ENCODE measurements at regions of chr11 and their contacts with region 1.

Region 1: GRCh38 chr11:72091005-72091691 is 10.5 kb downstream of the LRRC51 start:
- DNase-seq: peak; percentile 73

Region 2: DNA sequence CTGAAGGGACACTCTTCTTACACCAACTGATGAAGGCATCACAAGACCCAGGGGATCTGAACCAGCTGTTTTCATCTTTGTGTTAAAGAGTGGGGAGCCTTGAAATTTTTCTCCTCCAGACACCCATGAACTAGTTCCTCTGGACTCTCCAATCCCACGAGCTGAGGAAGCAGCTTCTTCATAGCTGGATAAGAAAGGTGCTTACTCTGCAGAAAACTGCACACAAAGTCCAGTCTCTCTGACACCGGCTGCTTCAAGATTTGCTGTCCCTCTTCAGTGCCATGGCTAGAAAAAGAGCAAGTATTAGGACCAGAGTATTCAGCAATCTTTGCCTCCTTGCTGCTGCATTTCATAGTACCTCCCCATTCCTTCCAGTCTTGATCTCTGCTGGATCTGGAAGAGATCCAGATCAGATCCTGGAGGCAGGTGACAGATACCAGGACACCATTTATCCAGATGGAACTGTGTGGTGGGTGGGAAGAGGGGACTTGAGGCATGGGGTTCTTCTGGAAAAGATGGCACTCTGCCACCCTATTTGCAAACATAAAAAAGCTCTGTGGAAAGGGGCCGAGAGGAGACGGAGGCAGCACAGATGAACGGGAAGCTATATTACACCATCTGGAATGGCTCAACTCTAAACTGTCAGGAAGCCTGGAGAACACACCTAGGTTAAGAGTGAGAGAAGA is 66.9 kb before region 1 on chr11:
- CTCF ChIA-PET with region 1: interaction called, 38 read pairs
- POLR2A ChIA-PET with region 1: interaction called, 11 read pairs
- DNase-seq: no peak

Region 3: DNA sequence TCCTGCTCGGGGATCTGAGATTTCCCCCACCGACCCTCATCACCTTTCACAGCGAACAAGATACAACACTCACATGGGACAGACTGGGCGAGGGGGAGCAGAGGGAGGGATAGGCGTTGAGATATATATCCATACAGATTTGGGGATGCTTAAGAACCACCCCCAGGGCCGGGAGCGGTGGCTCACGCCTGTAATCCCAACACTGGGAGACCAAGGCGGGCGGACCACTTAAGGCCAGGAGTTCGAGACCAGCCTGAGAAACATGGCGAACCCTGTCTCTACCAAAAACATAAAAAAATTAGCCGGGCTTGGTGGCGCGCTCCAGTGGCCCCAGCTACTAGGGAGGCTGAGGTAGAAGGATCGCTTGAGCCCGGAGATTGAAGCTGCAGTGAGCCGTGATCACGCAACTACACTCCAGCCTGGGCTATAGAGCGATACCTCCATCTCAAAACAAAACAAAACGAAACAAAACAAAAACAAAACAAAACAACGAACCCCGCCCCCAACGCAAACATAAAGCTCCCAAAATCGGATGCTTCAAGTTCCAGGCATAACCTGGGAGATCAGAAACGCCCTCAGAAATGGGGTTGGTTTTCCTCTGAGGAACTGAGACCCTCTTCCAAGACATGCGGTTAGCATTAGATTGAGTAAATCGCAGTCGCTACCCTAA is 10.0 kb before region 1 on chr11:
- CTCF ChIA-PET with region 1: interaction called, 14 read pairs
- POLR2A ChIA-PET with region 1: no interaction called
- DNase-seq: no peak

Measured in HEK293T (cell line).